GM23248 (cell line): ENCODE measurements at regions of chr5 and their contacts with region 1.

Region 1: GRCh38 chr5:150567021-150567717 is 59.2 kb downstream of the NDST1 start:
- DNase-seq: peak; percentile 89
- H3K4me3 ChIP-seq: peak overlapping the region; percentile 40
- H3K27ac ChIP-seq: peak overlapping the region; percentile 81
- H3K4me1 ChIP-seq: peaks cover 16% of the 10 kb centered on the region
- H3K27me3 ChIP-seq: no peaks in the 10 kb centered on the region

Region 2: DNA sequence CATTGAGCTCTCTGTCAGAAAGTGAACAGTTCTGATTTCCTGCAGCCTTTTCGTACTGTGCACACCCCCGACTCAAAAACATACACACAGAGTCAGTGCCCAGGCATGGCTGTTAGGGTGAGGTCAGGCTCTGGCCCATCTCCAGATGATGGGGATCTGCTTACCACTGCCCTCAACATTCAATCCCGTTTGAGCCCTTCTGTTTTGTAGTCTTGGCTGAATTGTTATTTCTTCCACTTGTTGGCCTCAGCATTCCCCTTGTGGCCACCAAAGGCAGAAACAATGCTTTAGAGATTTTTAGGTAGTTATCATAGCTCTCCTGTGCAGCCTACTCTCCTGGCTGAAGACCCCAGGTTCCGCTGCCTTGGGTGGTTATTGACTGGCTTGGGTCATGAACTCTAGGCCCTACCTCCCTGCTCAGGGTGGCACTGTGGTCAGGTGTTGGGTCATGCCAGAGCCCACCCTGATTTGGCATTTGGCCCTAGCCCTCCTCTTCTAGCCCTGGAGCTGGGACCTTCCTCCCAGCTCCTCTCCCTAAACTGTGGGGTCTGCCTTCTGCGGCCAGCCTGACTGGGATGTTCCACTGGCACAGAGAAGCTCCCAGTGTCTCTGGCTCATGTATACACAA is 86.1 kb after region 1 on chr5:
- in situ Hi-C with region 1: loop called (anchors 5 kb)
- DNase-seq: peak; percentile 57
- H3K4me3 ChIP-seq: no peak overlapping the region
- H3K27ac ChIP-seq: no peak overlapping the region
- H3K4me1 ChIP-seq: peaks cover 13% of the 10 kb centered on the region
- H3K27me3 ChIP-seq: no peaks in the 10 kb centered on the region